Ovary (tissue), 10 donors: ENCODE measurements at regions of chr3 and their contacts with region 1.

Region 1: DNA sequence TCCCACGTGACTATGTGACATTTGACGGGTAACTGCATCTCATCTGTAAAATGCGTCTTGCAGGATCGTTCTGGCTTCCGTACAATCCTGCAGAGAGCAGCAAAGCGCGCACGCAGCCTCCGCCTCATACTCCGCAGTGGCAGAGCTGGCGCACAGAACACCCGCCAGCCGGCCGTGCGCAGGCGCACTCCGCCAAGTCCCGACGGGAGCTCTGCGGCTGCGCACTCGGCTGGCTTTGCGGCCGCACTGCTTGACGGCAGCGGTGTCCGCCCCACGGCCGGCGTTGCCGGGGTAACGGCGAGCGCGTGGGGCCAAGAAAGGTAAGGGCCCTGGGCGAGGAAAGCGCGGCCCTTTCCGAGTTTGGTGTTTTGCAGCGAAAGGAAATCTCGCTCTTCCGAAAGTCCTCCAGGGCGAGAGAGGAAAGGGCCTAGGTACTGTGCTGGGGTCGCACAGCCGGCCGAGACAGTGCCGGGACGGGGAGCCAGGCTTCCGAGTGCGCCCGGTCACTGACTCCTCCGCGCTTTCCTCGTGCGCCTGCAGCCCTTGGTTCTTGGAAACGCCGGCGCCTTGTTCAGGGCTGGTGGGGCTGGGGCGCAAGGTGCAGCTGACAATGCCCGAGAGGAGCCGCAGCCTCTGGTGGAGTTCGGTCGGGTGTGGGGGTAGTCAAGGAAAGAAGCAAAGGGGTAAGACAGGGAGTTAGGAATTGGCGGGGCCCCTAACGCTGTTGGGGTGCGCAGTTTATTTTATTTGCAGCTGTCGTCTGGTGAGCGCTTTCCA is at the start of gene TSEN2:
- DNase-seq: peak; percentile 93 to 98 (median 97)
- H3K4me3 ChIP-seq: peak within 1 kb of the TSS; percentile 74
- H3K27ac ChIP-seq: peak within 1 kb of the TSS in 1 of 2 donors; percentile 64
- H3K4me1 ChIP-seq: peaks cover 10% of the 10 kb centered on the region
- H3K27me3 ChIP-seq: no peaks in the 10 kb centered on the region
- CTCF ChIP-seq: peak in 2 of 3 donors; percentile 21 to 45
- EP300 ChIP-seq: no peak
- POLR2A ChIP-seq: peak; percentile 34
- total RNA-seq, gene TSEN2: 18.1 to 27.4 (median 23.5) TPM

Region 2: GRCh38 chr3:12135029-12135657 is 349.2 kb before region 1 on chr3:
- intact Hi-C with region 1: loop called in 3 of 4 experiments (anchors 2 to 5 kb)
- DNase-seq: peak; percentile 56 to 84 (median 77)
- H3K4me3 ChIP-seq: no peak overlapping the region
- H3K27ac ChIP-seq: no peak overlapping the region
- H3K4me1 ChIP-seq: peaks cover 4% of the 10 kb centered on the region
- H3K27me3 ChIP-seq: no peaks in the 10 kb centered on the region
- CTCF ChIP-seq: peak; percentile 82 to 91 (median 89)
- EP300 ChIP-seq: no peak
- POLR2A ChIP-seq: no peak

Region 3: DNA sequence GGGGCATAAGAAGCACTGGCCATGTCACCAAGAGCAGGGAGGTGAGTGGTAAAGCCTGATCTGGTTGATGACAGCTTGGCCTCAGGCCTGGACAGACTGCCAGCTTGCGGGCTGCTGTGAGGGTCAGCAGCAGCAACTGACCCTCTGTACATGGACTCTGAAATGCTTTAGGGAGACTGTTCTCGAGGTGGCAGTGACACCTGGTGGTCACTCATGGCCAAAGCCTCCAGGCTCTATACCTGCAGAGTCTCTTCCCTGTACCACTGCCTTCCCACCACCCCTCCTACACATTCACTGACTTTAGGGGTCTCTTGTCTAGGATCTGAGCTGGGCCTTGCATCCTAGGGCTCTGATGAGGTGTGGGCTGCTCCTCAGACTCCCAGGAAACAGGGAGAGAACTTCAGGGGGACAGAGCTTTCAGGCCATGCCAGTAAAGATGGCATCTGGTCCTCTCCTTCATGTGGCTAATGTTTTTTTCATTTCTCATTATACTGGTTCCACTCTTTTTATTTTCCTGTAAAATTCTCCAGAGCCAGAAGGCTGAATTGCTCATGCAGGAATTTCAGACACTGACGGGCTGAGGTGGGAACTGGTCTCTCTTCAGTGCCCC is 308.4 kb before region 1 on chr3:
- intact Hi-C with region 1: loop called in 1 of 4 experiments (anchors 2 kb)
- DNase-seq: peak; percentile 48 to 76 (median 62)
- H3K4me3 ChIP-seq: no peak overlapping the region
- H3K27ac ChIP-seq: no peak overlapping the region
- H3K4me1 ChIP-seq: peaks cover 8% of the 10 kb centered on the region
- H3K27me3 ChIP-seq: no peaks in the 10 kb centered on the region
- CTCF ChIP-seq: peak; percentile 19 to 68 (median 59)
- EP300 ChIP-seq: no peak
- POLR2A ChIP-seq: no peak

Region 4: DNA sequence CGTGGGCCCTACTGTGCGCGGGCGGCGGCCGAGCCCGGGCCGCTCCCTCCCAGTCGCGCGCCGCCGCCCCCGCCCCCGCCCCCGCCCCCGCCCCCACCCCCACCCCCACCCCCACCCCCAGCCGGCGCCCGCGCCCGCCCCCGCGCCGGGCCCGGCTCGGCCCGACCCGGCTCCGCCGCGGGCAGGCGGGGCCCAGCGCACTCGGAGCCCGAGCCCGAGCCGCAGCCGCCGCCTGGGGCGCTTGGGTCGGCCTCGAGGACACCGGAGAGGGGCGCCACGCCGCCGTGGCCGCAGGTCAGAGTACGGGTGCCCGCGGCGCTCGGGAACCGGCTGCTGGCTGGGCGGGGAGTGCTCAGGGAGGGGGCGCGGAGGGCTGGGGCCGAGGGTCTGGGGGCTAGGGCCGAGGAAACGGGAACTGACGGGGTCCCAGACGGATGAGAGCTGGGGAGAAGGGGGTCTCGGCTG is 196.6 kb before region 1 on chr3:
- intact Hi-C with region 1: loop called in 2 of 4 experiments (anchors 2 to 10 kb)
- DNase-seq: peak; percentile 49 to 78 (median 75)
- H3K4me3 ChIP-seq: peak overlapping the region; percentile 75
- H3K27ac ChIP-seq: peak overlapping the region; percentile 77 to 87
- H3K4me1 ChIP-seq: peaks cover 4% of the 10 kb centered on the region
- H3K27me3 ChIP-seq: no peaks in the 10 kb centered on the region
- CTCF ChIP-seq: no peak
- EP300 ChIP-seq: no peak
- POLR2A ChIP-seq: no peak

Region 5: GRCh38 chr3:12522721-12523120 is 38.3 kb after region 1 on chr3:
- intact Hi-C with region 1: no loop called
- DNase-seq: no peak
- H3K4me3 ChIP-seq: no peak overlapping the region
- H3K27ac ChIP-seq: no peak overlapping the region
- H3K4me1 ChIP-seq: peaks cover 2% of the 10 kb centered on the region
- H3K27me3 ChIP-seq: no peaks in the 10 kb centered on the region
- CTCF ChIP-seq: no peak
- EP300 ChIP-seq: no peak
- POLR2A ChIP-seq: no peak

Region 6: GRCh38 chr3:12719984-12720898 is 235.9 kb after region 1 on chr3:
- intact Hi-C with region 1: loop called in 1 of 4 experiments (anchors 5 kb)
- DNase-seq: peak; percentile 69 to 85 (median 74)
- H3K4me3 ChIP-seq: peak overlapping the region; percentile 31
- H3K27ac ChIP-seq: no peak overlapping the region
- H3K4me1 ChIP-seq: no peaks in the 10 kb centered on the region
- H3K27me3 ChIP-seq: no peaks in the 10 kb centered on the region
- CTCF ChIP-seq: peak; percentile 87 to 89 (median 87)
- EP300 ChIP-seq: no peak
- POLR2A ChIP-seq: no peak